Heart right ventricle (tissue), 16 donors: ENCODE measurements at regions of chr14 and their contacts with region 1.

Region 1: DNA sequence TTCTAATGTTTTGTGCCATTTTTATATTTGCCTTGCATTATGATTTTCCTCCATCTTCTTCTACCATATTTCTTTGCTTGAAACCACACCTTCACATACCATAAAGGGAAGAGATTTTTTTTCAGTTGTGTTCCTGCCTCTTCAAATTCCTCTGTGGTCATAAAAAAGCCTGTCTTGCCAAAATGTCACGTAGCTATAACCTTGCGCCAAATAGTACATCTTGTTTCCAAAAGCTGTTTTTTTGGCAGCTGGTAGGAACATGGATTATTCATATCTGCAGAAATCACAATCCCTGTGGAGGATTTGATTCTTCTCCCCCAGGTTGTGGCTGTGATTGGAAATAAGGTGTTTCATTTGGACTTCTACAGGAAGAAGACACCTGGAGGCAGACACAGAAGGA is 133.6 kb upstream of the SLC35F4 start:
- DNase-seq: no peak
- ATAC-seq: no peak
- H3K4me3 ChIP-seq: no peak overlapping the region
- H3K27ac ChIP-seq: no peak overlapping the region
- H3K4me1 ChIP-seq: no peaks in the 10 kb centered on the region
- H3K27me3 ChIP-seq: no peaks in the 10 kb centered on the region
- CTCF ChIP-seq: no peak

Region 2: DNA sequence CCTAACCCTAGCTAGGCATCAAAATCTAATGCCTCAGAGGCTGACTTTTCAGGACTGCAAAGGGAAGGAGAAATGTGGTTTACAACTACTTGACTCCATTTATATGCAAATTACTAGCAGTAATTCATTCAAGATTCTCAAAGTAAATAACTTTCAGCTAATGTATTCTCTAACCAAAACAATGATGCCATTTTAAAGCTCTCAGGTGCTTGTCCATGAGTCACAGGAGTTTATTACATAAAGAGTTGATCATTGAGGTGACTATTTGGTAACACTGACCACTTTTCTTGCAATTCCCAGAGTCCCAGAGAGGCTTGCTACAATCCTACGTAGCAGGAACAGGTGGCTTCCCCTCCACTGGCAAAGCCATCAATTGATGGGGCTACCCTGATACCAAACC is 24.6 kb before region 1 on chr14:
- intact Hi-C with region 1: loop called in 1 of 10 experiments (anchors 2 kb)
- DNase-seq: no peak
- ATAC-seq: no peak
- H3K4me3 ChIP-seq: no peak overlapping the region
- H3K27ac ChIP-seq: no peak overlapping the region
- H3K4me1 ChIP-seq: no peaks in the 10 kb centered on the region
- H3K27me3 ChIP-seq: no peaks in the 10 kb centered on the region
- CTCF ChIP-seq: no peak